ENCODE measurements at regions of chr2 and their contacts with region 1.

Region 1: DNA sequence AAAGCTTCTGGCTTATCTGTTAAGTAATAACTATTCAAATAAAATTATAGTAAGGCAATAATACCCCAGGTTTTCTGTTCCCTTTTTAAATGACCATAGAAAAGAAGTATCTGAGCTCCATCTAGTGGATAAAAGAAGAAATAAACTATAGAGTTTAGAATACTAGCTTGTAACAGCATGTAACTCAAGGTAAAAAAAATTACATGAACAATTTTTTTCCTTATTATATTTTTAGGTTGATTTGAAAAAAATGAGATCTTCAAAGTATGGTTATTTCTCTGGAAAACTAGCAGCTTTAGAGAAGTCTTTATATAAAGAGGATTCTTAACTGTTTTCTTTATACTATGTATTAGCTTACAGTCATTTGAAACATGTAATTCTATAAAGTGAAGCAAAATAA is 58.1 kb downstream of the NCKAP1 start:
- DNase-seq: no peak
- H3K4me3 ChIP-seq: no peak overlapping the region
- H3K27ac ChIP-seq: no peak overlapping the region
- H3K4me1 ChIP-seq: peaks cover 0 to 8% (median 2%) of the 10 kb centered on the region in 4 donors
- H3K27me3 ChIP-seq: no peaks in the 10 kb centered on the region
- CTCF ChIP-seq: peak; percentile 52 to 62

Region 2: GRCh38 chr2:182763311-182763912 is 216.7 kb before region 1 on chr2:
- intact Hi-C with region 1: loop called (anchors 10 kb)
- DNase-seq: no peak
- H3K4me3 ChIP-seq: no peak overlapping the region
- H3K27ac ChIP-seq: peak overlapping the region in 1 of 2 donors; percentile 5
- H3K4me1 ChIP-seq: peaks cover 0 to 9% (median 3%) of the 10 kb centered on the region in 4 donors
- H3K27me3 ChIP-seq: no peaks in the 10 kb centered on the region
- CTCF ChIP-seq: peak; percentile 47 to 57

Region 3: GRCh38 chr2:182784777-182785176 is 195.3 kb before region 1 on chr2:
- intact Hi-C with region 1: loop called (anchors 10 kb)
- DNase-seq: no peak
- H3K4me3 ChIP-seq: no peak overlapping the region
- H3K27ac ChIP-seq: no peak overlapping the region
- H3K4me1 ChIP-seq: no peaks in the 10 kb centered on the region
- H3K27me3 ChIP-seq: no peaks in the 10 kb centered on the region
- CTCF ChIP-seq: peak; percentile 56 to 64

Region 4: DNA sequence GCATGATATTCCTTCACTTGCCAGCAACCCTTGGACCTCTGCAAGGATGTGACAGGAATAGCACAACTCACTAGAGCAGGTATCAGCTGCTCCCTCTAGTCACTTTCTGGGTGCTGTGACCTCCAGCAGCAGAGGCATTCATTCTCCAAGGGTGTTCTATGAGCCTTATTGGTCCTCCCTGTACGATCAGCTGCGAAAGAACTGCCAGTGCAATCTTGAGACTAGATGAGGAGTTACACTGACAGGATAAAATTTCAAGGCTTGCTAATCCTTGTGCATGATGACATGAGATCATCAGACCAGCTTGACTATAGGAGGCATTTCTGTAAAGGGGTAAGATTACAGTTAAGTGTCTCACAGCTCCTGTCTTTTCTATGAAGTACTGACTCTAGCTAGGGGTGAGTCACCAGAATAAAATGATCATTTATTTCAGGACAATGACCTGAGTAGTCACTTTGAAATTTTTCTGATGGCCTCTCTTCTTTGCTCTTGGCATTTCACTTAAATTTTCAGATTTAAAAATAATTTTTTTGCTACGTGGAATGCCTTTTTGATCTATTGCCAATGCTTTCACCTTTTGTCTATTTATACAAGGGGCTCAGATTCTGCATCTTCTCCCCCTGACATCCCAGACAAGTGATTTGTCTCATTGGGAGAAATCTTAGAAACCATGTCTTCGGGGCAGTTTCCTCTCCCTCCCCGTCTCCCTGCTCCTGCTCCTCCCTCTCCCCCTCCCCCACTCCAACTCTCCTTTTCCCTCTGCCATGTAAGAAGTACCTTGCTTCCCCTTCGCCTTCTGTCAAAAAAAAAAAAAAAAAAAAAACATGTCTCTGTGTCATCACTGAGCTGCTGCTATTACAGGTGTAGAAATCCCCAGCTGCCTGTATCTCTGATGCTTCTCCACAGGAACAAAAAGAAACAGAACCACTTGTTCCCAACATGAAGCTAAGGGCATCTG is 64.5 kb before region 1 on chr2:
- intact Hi-C with region 1: no loop called
- DNase-seq: no peak
- H3K4me3 ChIP-seq: no peak overlapping the region
- H3K27ac ChIP-seq: no peak overlapping the region
- H3K4me1 ChIP-seq: peaks cover 0 to 55% (median 4%) of the 10 kb centered on the region in 4 donors
- H3K27me3 ChIP-seq: no peaks in the 10 kb centered on the region
- CTCF ChIP-seq: no peak